Right cardiac atrium (tissue), 5 donors: ENCODE measurements at regions of chr4 and their contacts with region 1.

Region 1: GRCh38 chr4:154506253-154506652 is 14.7 kb upstream of the DCHS2 start:
- DNase-seq: no peak
- ATAC-seq: no peak
- H3K4me3 ChIP-seq: no peak overlapping the region
- H3K27ac ChIP-seq: no peak overlapping the region
- H3K4me1 ChIP-seq: no peaks in the 10 kb centered on the region
- H3K27me3 ChIP-seq: peaks cover 2% of the 10 kb centered on the region

Region 2: GRCh38 chr4:154384012-154384411 is 122.2 kb before region 1 on chr4:
- intact Hi-C with region 1: no loop called
- DNase-seq: no peak
- ATAC-seq: no peak
- H3K4me3 ChIP-seq: no peak overlapping the region
- H3K27ac ChIP-seq: no peak overlapping the region
- H3K4me1 ChIP-seq: no peaks in the 10 kb centered on the region
- H3K27me3 ChIP-seq: no peaks in the 10 kb centered on the region

Region 3: GRCh38 chr4:154399259-154399974 is 106.8 kb before region 1 on chr4:
- intact Hi-C with region 1: loop called in 2 of 4 experiments (anchors 10 kb)
- DNase-seq: no peak
- ATAC-seq: no peak
- H3K4me3 ChIP-seq: no peak overlapping the region
- H3K27ac ChIP-seq: no peak overlapping the region
- H3K4me1 ChIP-seq: no peaks in the 10 kb centered on the region
- H3K27me3 ChIP-seq: no peaks in the 10 kb centered on the region

Region 4: GRCh38 chr4:154618708-154619315 is 112.6 kb after region 1 on chr4:
- intact Hi-C with region 1: no loop called
- DNase-seq: peak in 2 of 3 donors; percentile 34 to 68
- ATAC-seq: peak in 1 of 2 donors; percentile 40
- H3K4me3 ChIP-seq: no peak overlapping the region
- H3K27ac ChIP-seq: no peak overlapping the region
- H3K4me1 ChIP-seq: no peaks in the 10 kb centered on the region
- H3K27me3 ChIP-seq: no peaks in the 10 kb centered on the region

Region 5: DNA sequence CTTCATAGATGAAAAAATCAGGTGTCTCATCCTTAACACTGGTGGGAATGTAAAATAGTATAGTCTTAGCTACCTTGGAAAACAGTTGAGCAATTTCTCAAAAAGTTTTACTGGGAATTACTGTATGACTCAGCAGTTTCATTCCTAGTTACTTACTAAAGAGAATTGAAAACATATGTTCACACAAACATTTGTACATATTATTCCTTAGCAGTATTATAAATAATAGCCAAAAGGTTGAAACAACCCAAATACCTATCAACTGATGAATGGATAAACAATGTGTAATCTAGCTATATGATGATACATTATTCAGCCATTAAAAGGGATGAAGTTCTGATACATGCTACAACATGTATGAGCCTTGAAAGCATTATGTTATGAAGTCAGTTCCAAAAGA is 316.5 kb after region 1 on chr4:
- intact Hi-C with region 1: no loop called
- DNase-seq: no peak
- ATAC-seq: no peak
- H3K4me3 ChIP-seq: no peak overlapping the region
- H3K27ac ChIP-seq: no peak overlapping the region
- H3K4me1 ChIP-seq: no peaks in the 10 kb centered on the region
- H3K27me3 ChIP-seq: no peaks in the 10 kb centered on the region